Dorsolateral prefrontal cortex (tissue), 120 donors: ENCODE measurements at regions of chr3 and their contacts with region 1.

Region 1: GRCh38 chr3:113838631-113839209 is at the start of gene GRAMD1C:
- DNase-seq: peak; percentile 73 to 89 (median 84)
- H3K4me3 ChIP-seq: peak within 1 kb of the TSS; percentile 37 to 77 (median 64)
- H3K27ac ChIP-seq: peak within 1 kb of the TSS in 40 of 59 donors; percentile 4 to 81 (median 52)
- H3K27me3 ChIP-seq: no peaks in the 10 kb centered on the region
- CTCF ChIP-seq: peak; percentile 67 to 93 (median 84)
- total RNA-seq, gene GRAMD1C: 8.4 to 46.7 (median 22.7) TPM

Region 2: GRCh38 chr3:113249111-113249510 is 589.6 kb before region 1 on chr3:
- intact Hi-C with region 1: no loop called
- DNase-seq: peak in 6 of 10 donors; percentile 50 to 75 (median 64)
- H3K4me3 ChIP-seq: no peak overlapping the region
- H3K27ac ChIP-seq: peak overlapping the region in 13 of 59 donors; percentile 2 to 62 (median 42)
- H3K27me3 ChIP-seq: no peaks in the 10 kb centered on the region
- CTCF ChIP-seq: no peak

Region 3: GRCh38 chr3:114056130-114057010 is 217.7 kb after region 1 on chr3 and contains the starts of genes CCDC191 and QTRT2:
- intact Hi-C with region 1: loop called in 1 of 2 experiments (anchors 5 kb)
- DNase-seq: peak; percentile 98 to 100 (median 99)
- H3K4me3 ChIP-seq: peak within 1 kb of the TSS; percentile 60 to 100 (median 88)
- H3K27ac ChIP-seq: peak within 1 kb of the TSS in 49 of 59 donors; percentile 23 to 83 (median 64)
- H3K27me3 ChIP-seq: no peaks in the 10 kb centered on the region
- CTCF ChIP-seq: peak in 23 of 56 donors; percentile 3 to 50 (median 26)
- total RNA-seq, gene CCDC191: 5.7 to 20.1 (median 11.1) TPM
- total RNA-seq, gene QTRT2: 7.6 to 24.3 (median 14.9) TPM

Region 4: DNA sequence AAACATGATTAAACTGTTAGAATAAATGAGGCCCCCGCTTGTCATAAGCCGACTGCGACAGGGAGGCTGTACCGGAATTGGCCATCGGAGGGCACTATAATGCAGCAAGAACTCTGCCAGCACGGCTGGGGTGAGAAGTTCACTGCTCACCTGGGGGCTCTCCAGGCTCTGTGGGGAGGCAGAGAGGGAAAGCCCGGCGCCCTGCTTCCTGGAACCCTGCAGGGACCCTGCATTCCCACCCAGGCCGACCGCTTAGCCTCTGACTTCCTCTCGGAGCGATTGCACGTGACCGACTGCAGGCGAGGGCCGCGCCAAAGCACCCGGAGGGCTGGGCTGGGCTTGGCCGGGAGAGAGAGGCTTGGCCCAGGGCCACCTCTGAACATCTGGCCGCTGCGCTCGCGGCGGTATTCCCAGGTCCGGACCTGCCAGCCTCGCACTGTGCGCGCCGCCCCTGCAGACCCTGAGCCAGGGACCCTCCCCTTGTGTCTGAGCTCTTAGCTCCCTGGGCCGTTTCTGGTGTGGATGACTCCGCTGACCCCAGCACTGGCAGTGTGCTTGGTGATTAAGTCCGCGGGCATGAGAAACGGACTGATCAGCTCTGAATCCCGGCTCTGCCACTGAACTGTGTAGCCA is 313.9 kb after region 1 on chr3:
- intact Hi-C with region 1: loop called in 1 of 2 experiments (anchors 10 kb)
- DNase-seq: peak; percentile 55 to 79 (median 69)
- H3K4me3 ChIP-seq: peak overlapping the region; percentile 29 to 80 (median 64)
- H3K27ac ChIP-seq: peak overlapping the region in 5 of 59 donors; percentile 8 to 62 (median 23)
- H3K27me3 ChIP-seq: no peaks in the 10 kb centered on the region
- CTCF ChIP-seq: peak; percentile 73 to 97 (median 91)

Region 5: DNA sequence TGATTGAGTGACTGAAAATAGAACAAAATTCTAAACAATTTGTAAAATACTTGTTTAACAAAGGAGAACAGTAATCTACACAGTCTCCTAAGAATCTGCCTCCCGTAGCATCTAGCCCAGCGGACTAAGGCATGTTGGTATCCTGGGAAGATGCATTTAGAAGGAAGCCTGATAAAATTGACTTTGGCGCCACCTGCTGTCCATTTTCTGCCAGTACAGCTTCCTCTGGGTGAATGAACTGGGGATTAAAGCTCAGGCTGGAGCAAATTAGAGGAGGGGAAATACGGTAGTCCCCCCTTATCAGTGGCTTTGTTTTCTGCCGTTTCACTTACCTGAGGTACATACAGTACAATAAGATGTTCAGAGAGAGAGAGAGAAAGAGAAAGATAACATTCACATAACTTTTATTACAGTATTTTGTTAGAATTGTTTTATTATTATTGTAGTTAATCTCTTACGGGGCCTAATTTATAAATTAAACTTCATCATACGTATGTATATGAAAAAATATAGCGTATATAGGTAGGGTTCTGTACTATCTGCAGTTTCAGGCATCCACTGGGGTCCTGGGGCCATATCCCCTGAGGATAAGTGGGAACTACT is 1976.2 kb after region 1 on chr3:
- intact Hi-C with region 1: loop called in 1 of 2 experiments (anchors 5 kb)
- DNase-seq: peak; percentile 62 to 89 (median 76)
- H3K4me3 ChIP-seq: no peak overlapping the region
- H3K27ac ChIP-seq: no peak overlapping the region
- H3K27me3 ChIP-seq: no peaks in the 10 kb centered on the region
- CTCF ChIP-seq: peak; percentile 86 to 100 (median 96)